Posterior vena cava (tissue), 2 donors: ENCODE measurements at regions of chr14 and their contacts with region 1.

Region 1: DNA sequence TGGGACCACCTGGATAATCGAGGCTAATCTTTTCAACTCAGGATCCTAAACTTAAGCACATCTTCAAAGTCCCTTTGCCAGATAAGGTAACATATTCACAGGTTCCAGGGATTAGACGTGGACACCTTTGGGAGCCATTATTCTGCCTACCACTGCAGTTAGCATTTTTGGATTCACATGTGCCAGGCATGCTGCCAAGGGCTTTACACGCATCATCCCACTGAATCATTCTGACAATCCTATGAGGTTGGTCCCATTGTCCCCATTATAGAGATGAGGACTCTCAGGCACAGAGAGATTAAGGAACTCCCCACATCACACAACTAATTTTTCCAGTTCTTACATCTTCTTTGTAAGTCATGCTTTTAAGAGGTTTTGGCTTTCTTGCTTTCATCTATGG is 34.5 kb downstream of the RTN1 start:
- DNase-seq: no peak

Region 2: DNA sequence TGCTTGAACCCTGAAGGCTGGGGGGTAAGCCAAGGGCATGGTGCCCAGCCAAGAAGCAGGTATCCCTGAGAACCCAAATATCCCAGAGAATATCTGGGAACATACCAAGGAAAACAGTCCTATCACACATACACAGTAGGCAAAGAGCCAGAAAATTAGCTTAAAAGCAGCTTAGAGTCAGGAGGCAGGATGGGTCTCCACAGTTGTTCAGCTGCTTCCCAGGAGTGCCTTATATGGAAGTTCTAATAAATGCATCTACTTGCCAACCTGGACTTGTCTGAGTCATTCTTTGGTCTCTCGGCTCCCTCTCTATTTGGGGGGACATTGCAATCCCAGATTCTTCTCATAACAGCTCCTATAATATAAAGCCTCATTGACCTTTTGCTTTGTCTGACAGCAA is 361.9 kb before region 1 on chr14:
- intact Hi-C with region 1: no loop called
- DNase-seq: no peak

Region 3: GRCh38 chr14:59811815-59812214 is 24.3 kb before region 1 on chr14:
- intact Hi-C with region 1: loop called in 1 of 2 experiments (anchors 1 kb)
- DNase-seq: no peak